Gastrocnemius medialis (tissue), 4 donors: ENCODE measurements at regions of chr22 and their contacts with region 1.

Region 1: GRCh38 chr22:20495861-20496681 is 476 bp upstream of the KLHL22 start:
- DNase-seq: peak; percentile 88 to 89
- ATAC-seq: peak; percentile 84
- H3K4me3 ChIP-seq: peak overlapping the region; percentile 63 to 74 (median 72)
- H3K27ac ChIP-seq: peak overlapping the region; percentile 92 to 96 (median 96)
- H3K4me1 ChIP-seq: peaks cover 10 to 16% of the 10 kb centered on the region in 2 donors
- H3K27me3 ChIP-seq: no peaks in the 10 kb centered on the region
- CTCF ChIP-seq: peak in 4 of 5 experiments; percentile 88 to 92 (median 90)
- POLR2A ChIP-seq: peak; percentile 90 to 96

Region 2: GRCh38 chr22:20079745-20080444 is 416.2 kb before region 1 on chr22 and contains the start of gene DGCR8:
- in situ Hi-C with region 1: no loop called
- intact Hi-C with region 1: loop called (anchors 5 kb)
- DNase-seq: peak; percentile 90 to 94
- ATAC-seq: peak; percentile 84 to 86
- H3K4me3 ChIP-seq: peak within 1 kb of the TSS; percentile 61 to 87 (median 75)
- H3K27ac ChIP-seq: peak within 1 kb of the TSS; percentile 83 to 96 (median 86)
- H3K4me1 ChIP-seq: peaks cover 43 to 50% of the 10 kb centered on the region in 2 donors
- H3K27me3 ChIP-seq: no peaks in the 10 kb centered on the region
- CTCF ChIP-seq: peak in 1 of 5 experiments; percentile 6
- POLR2A ChIP-seq: peak; percentile 62 to 65
- total RNA-seq, gene DGCR8: 5.2 to 16.5 (median 11.2) TPM

Region 3: DNA sequence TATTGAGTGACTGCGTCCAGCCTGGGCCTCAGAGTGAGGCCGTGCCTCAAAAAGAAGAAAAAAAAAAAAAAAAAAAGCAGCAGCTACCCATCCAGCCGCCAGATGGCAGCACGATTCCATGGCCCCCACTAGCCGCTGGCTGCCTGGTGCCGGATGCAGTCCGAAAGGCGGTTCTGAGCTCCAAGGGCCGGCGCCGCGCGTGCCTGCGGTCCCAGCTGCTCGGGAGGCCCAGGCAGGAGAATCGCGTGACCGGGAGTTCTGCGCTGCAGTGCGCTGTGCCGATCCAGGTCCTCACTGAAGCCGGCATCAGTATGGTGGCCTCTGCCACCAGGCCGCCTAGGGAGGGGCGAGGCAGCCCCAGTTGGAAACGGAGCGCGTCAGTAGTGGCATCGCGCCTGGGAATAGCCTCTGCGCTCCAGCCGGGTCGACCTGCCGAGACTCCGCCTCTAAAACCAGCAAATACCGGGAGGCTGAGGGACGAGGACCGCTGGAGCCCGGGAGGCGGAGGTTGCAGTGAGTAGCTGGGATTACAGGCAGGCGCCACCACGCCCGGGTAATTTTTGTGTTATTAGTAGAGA is 77.8 kb before region 1 on chr22:
- in situ Hi-C with region 1: loop called in 1 of 4 experiments (anchors 5 kb)
- intact Hi-C with region 1: loop called (anchors 2 kb)
- DNase-seq: peak; percentile 66 to 71
- ATAC-seq: peak; percentile 78 to 83
- H3K4me3 ChIP-seq: peak overlapping the region; percentile 40 to 63 (median 46)
- H3K27ac ChIP-seq: peak overlapping the region in 2 of 4 donors; percentile 34 to 50
- H3K4me1 ChIP-seq: peaks cover 0 to 7% of the 10 kb centered on the region in 2 donors
- H3K27me3 ChIP-seq: no peaks in the 10 kb centered on the region
- CTCF ChIP-seq: peak; percentile 64 to 92 (median 88)
- POLR2A ChIP-seq: no peak

Region 4: GRCh38 chr22:20507253-20508066 is 11.4 kb after region 1 on chr22 and contains the start of gene MED15:
- in situ Hi-C with region 1: no loop called
- intact Hi-C with region 1: loop called (anchors 1 kb)
- DNase-seq: peak; percentile 89 to 90
- ATAC-seq: peak; percentile 85 to 89
- H3K4me3 ChIP-seq: peak within 1 kb of the TSS; percentile 74 to 99 (median 90)
- H3K27ac ChIP-seq: peak within 1 kb of the TSS; percentile 94 to 99 (median 98)
- H3K4me1 ChIP-seq: peaks cover 34 to 51% of the 10 kb centered on the region in 2 donors
- H3K27me3 ChIP-seq: no peaks in the 10 kb centered on the region
- CTCF ChIP-seq: no peak
- POLR2A ChIP-seq: peak; percentile 95 to 97
- total RNA-seq, gene MED15: 37.5 to 69.4 (median 52.7) TPM

Region 5: DNA sequence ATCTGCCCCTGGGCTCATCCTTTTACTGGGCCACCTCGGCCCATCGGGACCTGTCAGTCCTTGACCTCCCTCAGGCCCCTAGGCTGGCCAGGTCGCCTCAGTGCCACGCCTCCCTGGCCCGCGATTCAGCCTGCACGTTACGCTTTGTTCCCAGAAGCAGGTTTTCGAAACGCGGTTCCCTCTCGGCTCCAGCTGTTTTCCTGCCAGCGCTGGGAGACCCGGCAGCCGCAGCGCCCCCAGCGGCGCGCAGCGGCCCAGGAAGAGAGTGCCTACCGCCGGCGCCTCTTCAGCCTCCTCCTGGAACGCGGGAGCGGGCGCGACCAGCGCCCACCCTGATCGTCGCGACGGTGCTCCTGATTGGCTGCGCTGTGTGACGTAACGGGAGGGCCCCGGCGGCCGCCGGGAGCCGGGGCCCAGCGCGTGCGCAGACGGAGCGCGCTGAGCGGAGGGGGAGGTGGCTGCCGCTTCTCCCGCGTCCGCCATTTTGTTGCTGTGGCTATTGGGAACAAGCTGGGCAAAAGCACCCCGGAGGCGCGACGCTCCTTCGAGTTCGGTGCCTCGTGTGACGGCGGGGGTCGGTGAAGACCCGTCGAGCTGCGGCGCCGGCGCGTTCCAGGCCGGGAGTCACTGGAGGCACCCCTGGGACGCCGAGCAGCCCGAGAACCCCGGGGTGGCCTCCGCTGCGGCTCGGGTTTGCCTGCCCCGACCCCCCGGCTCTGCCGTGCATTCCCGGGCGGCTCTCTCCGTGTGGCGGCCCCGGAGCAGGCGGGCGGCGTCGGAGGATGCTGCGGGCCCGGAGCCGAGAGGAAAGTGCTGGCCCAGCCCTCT is 421.1 kb after region 1 on chr22 and contains the start of gene CRKL:
- in situ Hi-C with region 1: no loop called
- intact Hi-C with region 1: loop called (anchors 5 kb)
- DNase-seq: peak; percentile 96 to 97
- ATAC-seq: peak; percentile 87 to 90
- H3K4me3 ChIP-seq: peak within 1 kb of the TSS; percentile 87 to 97 (median 90)
- H3K27ac ChIP-seq: peak within 1 kb of the TSS; percentile 95 to 97 (median 96)
- H3K4me1 ChIP-seq: peaks cover 18 to 40% of the 10 kb centered on the region in 2 donors
- H3K27me3 ChIP-seq: no peaks in the 10 kb centered on the region
- CTCF ChIP-seq: peak; percentile 92 to 98 (median 96)
- POLR2A ChIP-seq: peak; percentile 99
- total RNA-seq, gene CRKL: 73.3 to 109 (median 84.7) TPM